Breast epithelium (tissue), 4 donors: ENCODE measurements at regions of chr19 and their contacts with region 1.

Region 1: DNA sequence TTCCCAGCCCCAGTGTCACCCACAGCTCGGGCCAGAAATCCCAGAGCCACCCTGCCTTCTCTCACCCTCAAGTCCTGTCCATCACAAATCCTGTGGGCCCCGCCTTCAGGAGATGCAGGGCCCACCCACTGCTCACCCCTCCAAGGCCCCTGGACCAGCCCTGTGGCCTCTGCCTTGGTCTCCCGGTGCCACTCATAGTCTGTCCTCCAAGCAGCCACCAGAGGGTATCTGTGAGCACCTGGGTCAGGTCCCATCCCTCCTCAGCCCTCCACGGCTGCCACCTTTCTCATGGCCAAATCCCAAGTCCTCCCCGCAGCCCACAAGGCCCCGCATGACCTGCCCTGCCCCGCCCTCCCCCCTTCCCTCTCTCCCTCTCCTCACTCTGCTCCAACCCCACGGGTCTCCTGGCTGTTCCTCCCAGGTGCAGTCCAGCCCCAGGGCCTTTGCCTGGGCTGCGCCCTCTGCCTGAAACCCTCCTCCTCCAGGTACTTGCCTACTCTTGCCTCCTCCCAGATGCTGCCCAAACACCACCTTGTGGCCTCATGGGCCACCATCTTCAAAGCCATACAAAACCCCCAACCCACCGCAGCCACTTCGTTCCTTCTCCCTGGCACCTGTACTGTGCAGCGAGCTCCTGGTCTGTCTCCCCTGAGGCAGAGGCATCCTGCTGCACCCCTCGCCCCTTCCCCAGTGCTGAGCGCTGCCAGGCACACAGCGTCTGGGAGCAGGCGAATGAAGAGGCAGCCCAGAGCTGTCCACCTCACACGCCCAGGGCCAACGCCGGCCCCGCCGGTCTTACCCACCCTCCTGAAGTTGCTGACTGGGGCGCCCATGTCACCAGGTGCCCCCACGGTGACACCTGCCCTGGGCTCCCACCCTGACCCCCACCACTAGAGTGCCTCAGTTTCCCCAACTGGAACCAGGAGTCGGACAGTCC is 13.2 kb upstream of the UQCR11 start:
- DNase-seq: no peak
- H3K4me3 ChIP-seq: no peak overlapping the region
- H3K27ac ChIP-seq: no peak overlapping the region
- H3K4me1 ChIP-seq: no peaks in the 10 kb centered on the region
- H3K27me3 ChIP-seq: no peaks in the 10 kb centered on the region
- CTCF ChIP-seq: peak in 2 of 3 donors; percentile 25 to 41
- POLR2A ChIP-seq: no peak

Region 2: GRCh38 chr19:1549332-1549945 is 69.0 kb before region 1 on chr19:
- intact Hi-C with region 1: loop called (anchors 5 kb)
- DNase-seq: no peak
- H3K4me3 ChIP-seq: no peak overlapping the region
- H3K27ac ChIP-seq: no peak overlapping the region
- H3K4me1 ChIP-seq: no peaks in the 10 kb centered on the region
- H3K27me3 ChIP-seq: no peaks in the 10 kb centered on the region
- CTCF ChIP-seq: no peak
- POLR2A ChIP-seq: no peak